ENCODE measurements at regions of chr4 and their contacts with region 1.

Region 1: GRCh38 chr4:55866973-55867574 is 13.6 kb downstream of the EXOC1 start:
- DNase-seq: peak; percentile 35 to 75 (median 42)
- ATAC-seq: peak; percentile 97
- H3K4me3 ChIP-seq: no peak overlapping the region
- H3K27ac ChIP-seq: peak overlapping the region; percentile 64; the same call in 2 of the 3 replicates
- H3K4me1 ChIP-seq: peaks cover 0 to 10% of the 10 kb centered on the region in 2 experiments; a peak in 2 of 5 replicates
- H3K27me3 ChIP-seq: no peaks in the 10 kb centered on the region
- CTCF ChIP-seq: peak; percentile 65 to 89 (median 77)
- EP300 ChIP-seq: no peak
- POLR2A ChIP-seq: no peak
- RAD21 ChIP-seq: peak; percentile 77 to 80

Region 2: DNA sequence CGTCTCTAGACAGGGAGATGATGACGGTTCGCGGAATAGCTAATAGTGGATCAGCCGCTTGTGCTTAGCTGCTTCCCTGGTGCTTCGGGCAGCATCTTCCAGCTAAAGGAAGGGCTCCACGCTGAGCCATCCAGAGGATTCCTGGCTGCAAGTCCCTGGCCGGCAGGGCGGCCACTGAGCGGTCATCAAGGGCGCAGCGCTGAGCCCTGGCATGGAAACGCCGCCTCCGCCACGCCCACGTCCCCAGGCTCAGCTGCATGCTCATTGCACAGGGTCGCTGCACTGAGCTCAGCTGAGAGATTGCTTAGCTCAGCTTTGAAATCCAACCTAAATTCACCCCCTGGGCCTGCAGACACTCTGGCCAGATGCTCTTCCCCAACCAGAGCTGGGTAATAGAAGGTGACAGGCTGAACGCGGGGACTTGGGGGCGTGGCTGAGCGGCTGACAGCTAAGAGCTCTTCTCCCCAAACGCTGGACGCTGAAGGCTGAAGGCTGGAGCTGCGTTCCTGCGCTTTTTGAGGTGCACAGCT is 1327.5 kb before region 1 on chr4:
- CTCF ChIA-PET with region 1: no interaction called
- POLR2A ChIA-PET with region 1: no interaction called
- in situ Hi-C with region 1: no loop called
- intact Hi-C with region 1: no loop called
- DNase-seq: peak; percentile 20 to 64 (median 24)
- ATAC-seq: peak; percentile 69
- H3K4me3 ChIP-seq: peak overlapping the region; percentile 23; the same call in 1 of the 2 replicates
- H3K27ac ChIP-seq: no peak overlapping the region
- H3K4me1 ChIP-seq: peaks cover 19 to 32% of the 10 kb centered on the region in 2 experiments
- H3K27me3 ChIP-seq: no peaks in the 10 kb centered on the region
- CTCF ChIP-seq: no peak
- EP300 ChIP-seq: no peak
- POLR2A ChIP-seq: no peak
- RAD21 ChIP-seq: no peak

Region 3: DNA sequence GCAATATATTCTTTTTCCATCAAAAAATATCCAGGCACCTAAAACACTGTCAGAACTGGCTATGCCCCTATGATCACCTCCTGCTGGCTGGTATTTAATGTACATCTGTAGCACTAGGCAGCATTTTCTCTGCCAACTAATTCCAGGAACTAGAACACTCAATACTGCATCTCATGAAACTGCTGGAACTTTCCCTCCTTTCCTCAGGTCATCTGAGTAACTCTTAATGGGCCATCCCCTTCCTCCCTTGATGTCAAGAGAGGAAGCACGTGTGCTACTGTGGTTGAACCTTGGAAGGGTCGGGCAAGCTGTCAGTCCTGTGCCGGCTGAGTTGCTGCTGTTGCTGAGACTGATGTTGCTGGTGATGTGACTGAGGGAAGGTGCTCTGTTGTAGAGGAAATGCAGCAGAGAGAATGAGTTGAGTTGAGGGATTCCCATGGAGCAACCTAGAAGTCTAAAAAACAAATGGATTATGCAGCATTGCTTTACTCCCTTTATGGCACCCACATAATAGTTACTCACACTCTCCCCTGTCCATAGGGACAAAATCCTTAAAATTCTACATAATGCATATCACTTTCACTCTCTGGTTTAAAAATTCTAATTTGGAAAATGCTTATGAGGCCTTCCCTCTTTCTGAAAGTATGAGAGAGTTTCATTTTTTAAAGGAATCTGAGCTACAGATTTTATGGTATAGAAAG is 431.8 kb before region 1 on chr4:
- CTCF ChIA-PET with region 1: no interaction called
- POLR2A ChIA-PET with region 1: no interaction called
- in situ Hi-C with region 1: no loop called
- intact Hi-C with region 1: loop called (anchors 10 kb)
- DNase-seq: peak in 1 of 4 experiments; percentile 13
- ATAC-seq: peak; percentile 41
- H3K4me3 ChIP-seq: no peak overlapping the region
- H3K27ac ChIP-seq: no peak overlapping the region
- H3K4me1 ChIP-seq: peaks cover 9 to 10% of the 10 kb centered on the region in 2 experiments; a peak in 4 of 5 replicates
- H3K27me3 ChIP-seq: no peaks in the 10 kb centered on the region
- CTCF ChIP-seq: peak in 2 of 3 experiments; percentile 11 to 29; a peak in 1 of 6 replicates
- EP300 ChIP-seq: no peak
- POLR2A ChIP-seq: no peak
- RAD21 ChIP-seq: no peak

Region 4: GRCh38 chr4:55625835-55626234 is 241.2 kb before region 1 on chr4:
- CTCF ChIA-PET with region 1: no interaction called
- POLR2A ChIA-PET with region 1: no interaction called
- in situ Hi-C with region 1: no loop called
- intact Hi-C with region 1: loop called (anchors 5 kb)
- DNase-seq: no peak
- ATAC-seq: peak; percentile 57
- H3K4me3 ChIP-seq: no peak overlapping the region
- H3K27ac ChIP-seq: peak overlapping the region; percentile 27; the same call in 1 of the 3 replicates
- H3K4me1 ChIP-seq: no peaks in the 10 kb centered on the region; a peak in 3 of 5 replicates
- H3K27me3 ChIP-seq: no peaks in the 10 kb centered on the region
- CTCF ChIP-seq: no peak
- EP300 ChIP-seq: no peak
- POLR2A ChIP-seq: no peak
- RAD21 ChIP-seq: no peak

Region 5: DNA sequence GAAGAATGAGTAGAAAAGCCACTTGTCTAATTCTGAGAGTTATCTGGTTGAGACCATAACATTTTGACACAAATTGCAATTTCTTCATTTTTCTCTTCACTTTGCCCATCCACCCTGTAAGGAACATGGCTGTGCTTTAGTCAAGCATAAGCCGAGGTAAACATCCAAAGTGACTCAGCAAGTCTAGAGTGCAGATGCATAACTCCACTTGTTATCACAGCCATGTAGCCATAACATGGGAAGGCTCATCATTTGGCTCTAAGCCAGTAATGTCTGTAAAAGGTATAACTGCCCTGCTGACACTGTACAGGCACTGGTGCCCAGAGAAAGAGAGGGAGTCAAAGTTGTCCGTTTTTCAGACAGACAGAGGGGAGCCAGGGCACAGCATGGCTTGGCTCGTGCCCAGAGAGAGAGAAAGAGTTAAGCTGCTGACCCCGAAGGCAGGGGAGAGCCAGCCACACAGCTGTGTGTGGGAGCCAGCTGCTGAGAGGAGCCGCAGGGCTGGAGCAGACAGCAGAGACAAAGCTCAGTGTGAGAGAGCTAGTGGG is 124.3 kb before region 1 on chr4:
- CTCF ChIA-PET with region 1: no interaction called
- POLR2A ChIA-PET with region 1: no interaction called
- in situ Hi-C with region 1: no loop called
- intact Hi-C with region 1: loop called (anchors 2 kb)
- DNase-seq: peak in 2 of 4 experiments; percentile 29 to 74
- ATAC-seq: peak; percentile 82
- H3K4me3 ChIP-seq: no peak overlapping the region
- H3K27ac ChIP-seq: no peak overlapping the region
- H3K4me1 ChIP-seq: peaks cover 7 to 8% of the 10 kb centered on the region in 2 experiments; a peak in 4 of 5 replicates
- H3K27me3 ChIP-seq: no peaks in the 10 kb centered on the region
- CTCF ChIP-seq: no peak
- EP300 ChIP-seq: no peak
- POLR2A ChIP-seq: no peak
- RAD21 ChIP-seq: no peak